AG04449 (cell line): ENCODE measurements at regions of chr20 and their contacts with region 1.

Region 1: DNA sequence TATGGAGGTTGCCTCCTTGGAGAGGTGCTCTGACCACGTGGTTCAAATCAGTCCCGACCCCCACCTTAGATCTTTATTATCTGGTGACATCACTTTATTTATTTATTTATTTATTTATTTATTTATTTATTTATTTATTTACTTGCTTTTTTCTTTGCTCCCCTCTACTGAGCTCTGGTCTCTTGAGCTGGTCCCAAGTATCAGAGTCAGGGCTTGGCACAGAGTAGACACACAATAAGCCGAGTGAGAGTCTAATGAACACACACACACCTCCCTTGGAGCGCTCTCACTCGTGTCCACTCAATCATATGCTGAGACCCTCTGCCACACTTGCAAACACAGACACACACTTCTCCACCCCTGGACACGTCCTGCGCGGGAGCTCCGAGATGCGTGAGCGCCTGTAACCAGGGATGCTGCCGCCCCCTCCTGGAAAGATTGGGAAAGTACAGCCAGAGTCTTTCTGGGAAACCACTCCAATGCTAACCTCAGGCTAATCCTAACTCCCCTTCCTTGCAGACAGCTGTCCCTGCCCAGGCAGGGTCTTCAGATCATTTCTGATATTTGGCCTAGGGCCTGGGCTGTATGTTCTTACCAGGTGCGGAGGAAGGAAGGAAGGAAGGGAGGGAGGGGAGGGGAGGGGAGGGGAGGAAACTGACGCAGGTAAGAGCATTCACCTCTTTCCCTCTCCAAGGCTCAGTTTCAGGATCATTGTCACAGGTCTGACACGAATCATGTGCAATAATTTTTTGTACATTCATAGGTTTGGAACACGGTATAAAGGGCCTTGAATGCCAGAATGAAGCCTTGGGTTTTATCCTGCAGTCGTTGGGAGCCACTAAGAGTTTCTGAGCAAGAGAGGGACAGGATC is 70.9 kb downstream of the STK35 start:
- DNase-seq: no peak
- H3K4me3 ChIP-seq: no peak overlapping the region
- CTCF ChIP-seq: peak; percentile 91

Region 2: GRCh38 chr20:1764136-1765033 is 408.2 kb before region 1 on chr20:
- CTCF ChIA-PET with region 1: interaction called, 36 read pairs
- POLR2A ChIA-PET with region 1: no interaction called
- DNase-seq: peak; percentile 49
- H3K4me3 ChIP-seq: no peak overlapping the region
- CTCF ChIP-seq: peak; percentile 91

Region 3: DNA sequence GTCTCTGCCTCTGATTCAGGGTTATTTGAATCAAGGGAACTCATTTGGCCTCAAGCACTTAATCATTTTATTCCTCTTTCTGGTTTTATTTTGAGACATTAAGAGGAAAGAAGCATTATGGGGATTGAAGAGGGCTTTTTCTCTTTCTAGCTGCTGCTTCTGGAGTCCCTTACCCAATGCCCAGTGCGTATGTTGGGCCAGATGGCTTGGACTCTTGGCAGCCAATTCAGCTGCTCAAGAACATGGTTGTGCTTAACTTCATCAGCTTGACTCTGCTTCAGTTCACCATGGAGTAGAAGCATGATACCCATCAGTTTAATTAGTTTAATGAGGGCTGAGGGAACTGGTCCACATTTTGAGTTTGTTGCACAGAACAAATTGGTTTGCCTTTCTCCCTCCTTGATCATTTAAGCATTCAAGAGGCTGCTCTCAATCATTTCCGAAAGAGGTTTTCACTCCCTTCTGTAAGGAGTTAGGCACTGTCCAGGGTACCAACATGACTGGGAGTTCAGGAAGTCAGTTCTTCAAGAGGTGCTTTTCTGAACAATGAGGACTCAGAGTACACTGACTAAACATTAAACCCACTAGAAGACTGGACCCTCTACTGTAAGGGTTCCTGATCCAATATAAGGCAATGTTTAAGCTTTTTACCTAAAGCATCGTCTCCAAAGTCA is 193.3 kb before region 1 on chr20:
- CTCF ChIA-PET with region 1: no interaction called
- POLR2A ChIA-PET with region 1: no interaction called
- DNase-seq: no peak
- H3K4me3 ChIP-seq: no peak overlapping the region
- CTCF ChIP-seq: no peak

Region 4: DNA sequence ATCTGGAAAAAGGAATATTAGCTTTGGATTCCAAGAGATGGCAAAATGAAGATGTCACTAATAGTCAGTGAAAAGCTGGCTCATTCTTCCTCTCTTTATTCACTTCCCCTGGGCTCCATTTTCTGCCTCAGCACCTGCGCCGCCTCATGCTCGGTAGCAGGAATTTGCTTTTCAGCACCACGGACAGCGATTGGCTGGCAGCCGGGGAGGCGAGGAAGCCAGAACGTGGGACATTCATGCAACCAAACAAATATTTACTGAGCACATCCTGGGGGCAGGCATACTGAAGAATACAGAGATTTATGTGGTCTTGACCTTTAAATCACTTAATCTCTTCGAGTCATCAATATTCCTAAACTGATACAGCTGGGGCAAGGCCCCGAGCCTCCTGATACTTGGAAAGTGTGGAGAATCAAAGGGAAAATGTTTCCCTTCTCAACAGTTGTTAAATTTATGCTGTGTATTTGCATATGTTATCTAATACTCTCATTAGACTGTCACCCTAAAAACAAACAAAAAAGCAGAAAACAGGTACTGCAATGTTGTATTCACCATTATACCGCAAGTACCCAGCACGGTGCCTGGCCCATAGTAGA is 166.6 kb before region 1 on chr20:
- CTCF ChIA-PET with region 1: interaction called, 129 read pairs
- POLR2A ChIA-PET with region 1: no interaction called
- DNase-seq: no peak
- H3K4me3 ChIP-seq: no peak overlapping the region
- CTCF ChIP-seq: no peak

Region 5: GRCh38 chr20:2101865-2102584 is 70.5 kb before region 1 on chr20:
- CTCF ChIA-PET with region 1: interaction called, 15 read pairs
- POLR2A ChIA-PET with region 1: interaction called, 5 read pairs
- DNase-seq: peak; percentile 63
- H3K4me3 ChIP-seq: peak overlapping the region; percentile 94
- CTCF ChIP-seq: no peak

Region 6: GRCh38 chr20:2183381-2183780 is 10.8 kb after region 1 on chr20:
- CTCF ChIA-PET with region 1: interaction called, 28 read pairs
- POLR2A ChIA-PET with region 1: no interaction called
- DNase-seq: no peak
- H3K4me3 ChIP-seq: no peak overlapping the region
- CTCF ChIP-seq: no peak